ENCODE measurements at regions of chr12 and their contacts with region 1.

Region 1: GRCh38 chr12:29073628-29074239 is 75.3 kb upstream of the FAR2 start:
- DNase-seq: peak; percentile 17
- H3K27ac ChIP-seq: no peak overlapping the region
- CTCF ChIP-seq: peak; percentile 53

Region 2: GRCh38 chr12:29317556-29318363 is 244.0 kb after region 1 on chr12:
- CTCF ChIA-PET with region 1: interaction called, 15 read pairs
- POLR2A ChIA-PET with region 1: no interaction called
- DNase-seq: peak; percentile 36
- H3K27ac ChIP-seq: no peak overlapping the region
- CTCF ChIP-seq: peak; percentile 20; the same call in 1 of the 2 replicates